PC-9 (cell line): ENCODE measurements at regions of chr16 and their contacts with region 1.

Region 1: GRCh38 chr16:51762081-51762996 is 611.3 kb upstream of the SALL1 start:
- DNase-seq: peak in 1 of 2 experiments; percentile 37
- H3K4me3 ChIP-seq: no peak overlapping the region
- H3K27ac ChIP-seq: no peak overlapping the region
- H3K4me1 ChIP-seq: no peaks in the 10 kb centered on the region
- H3K27me3 ChIP-seq: peaks cover 45% of the 10 kb centered on the region
- CTCF ChIP-seq: peak; percentile 89

Region 2: GRCh38 chr16:50836121-50836621 is 926.2 kb before region 1 on chr16:
- CTCF ChIA-PET with region 1: interaction called, 10 read pairs
- POLR2A ChIA-PET with region 1: no interaction called
- intact Hi-C with region 1: no loop called
- DNase-seq: no peak
- H3K4me3 ChIP-seq: no peak overlapping the region
- H3K27ac ChIP-seq: no peak overlapping the region
- H3K4me1 ChIP-seq: no peaks in the 10 kb centered on the region
- H3K27me3 ChIP-seq: peaks cover 65% of the 10 kb centered on the region
- CTCF ChIP-seq: no peak

Region 3: DNA sequence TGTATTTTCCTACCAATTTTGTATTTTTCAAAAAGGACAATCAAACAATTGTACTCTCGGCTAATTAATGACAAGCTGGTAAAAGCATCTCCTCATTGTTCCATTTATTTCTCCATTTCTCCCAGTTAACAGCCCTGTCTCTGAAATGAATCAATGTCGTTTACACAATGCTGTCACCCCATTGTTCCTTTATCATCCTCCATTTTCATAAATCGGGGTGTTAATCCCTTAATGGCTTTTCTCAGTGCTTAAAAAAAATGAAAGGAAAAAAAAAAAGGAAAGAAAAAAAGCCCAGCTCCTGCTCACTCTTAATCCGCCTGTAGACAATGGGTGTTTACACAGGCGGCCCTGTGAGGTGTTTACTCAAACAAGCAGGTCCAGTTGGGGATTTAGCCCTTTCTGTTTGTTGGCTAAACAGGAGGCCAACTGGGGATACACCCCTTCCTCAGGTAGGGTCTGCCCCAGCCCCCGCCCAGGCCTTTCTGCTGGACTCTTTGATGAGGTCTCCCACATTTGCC is 524.4 kb before region 1 on chr16:
- CTCF ChIA-PET with region 1: interaction called, 10 read pairs
- POLR2A ChIA-PET with region 1: no interaction called
- intact Hi-C with region 1: no loop called
- DNase-seq: no peak
- H3K4me3 ChIP-seq: no peak overlapping the region
- H3K27ac ChIP-seq: no peak overlapping the region
- H3K4me1 ChIP-seq: no peaks in the 10 kb centered on the region
- H3K27me3 ChIP-seq: peaks cover 16% of the 10 kb centered on the region; the same call in 1 of the 2 replicates
- CTCF ChIP-seq: no peak